OCI-LY7 (cell line): ENCODE measurements at regions of chr19 and their contacts with region 1.

Region 1: GRCh38 chr19:11535792-11536595 is 2.7 kb upstream of the CNN1 start:
- DNase-seq: peak; percentile 93
- H3K4me3 ChIP-seq: peak overlapping the region; percentile 44
- H3K27ac ChIP-seq: no peak overlapping the region
- H3K4me1 ChIP-seq: peaks cover 14% of the 10 kb centered on the region
- CTCF ChIP-seq: peak; percentile 91

Region 2: DNA sequence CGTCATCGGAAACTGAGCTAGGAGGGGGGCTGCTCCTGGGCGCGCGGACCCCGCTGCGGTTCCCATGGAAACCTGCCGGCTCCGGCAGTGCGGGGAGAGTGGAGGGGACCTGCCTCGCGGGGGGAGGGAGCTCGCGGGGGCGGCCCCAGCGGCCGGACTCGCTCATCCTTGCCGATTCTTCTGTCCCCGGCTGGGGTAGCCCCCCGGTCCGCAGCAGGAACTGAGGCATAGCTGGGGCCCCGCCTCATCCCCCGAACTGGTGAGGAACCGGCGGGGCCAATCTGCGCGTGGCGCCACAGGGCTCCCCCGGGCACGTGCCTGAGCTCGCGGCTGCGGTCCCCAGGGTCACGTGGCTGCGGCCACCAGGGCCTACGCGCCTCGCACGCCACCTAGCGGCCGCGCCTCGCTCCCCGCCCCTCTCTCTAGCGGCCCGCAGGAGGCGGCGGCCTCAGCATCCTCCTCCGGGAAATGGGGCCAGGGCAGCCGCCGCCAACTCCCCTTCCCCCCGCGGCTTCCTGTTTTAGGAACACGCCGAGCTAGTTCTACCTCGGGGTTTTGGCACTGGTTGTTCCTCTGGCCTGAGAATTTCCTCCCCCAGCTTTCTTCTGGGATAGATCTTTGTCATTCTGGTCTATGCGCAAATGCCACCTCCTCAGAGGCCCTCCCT is 53.5 kb before region 1 on chr19:
- CTCF ChIA-PET with region 1: no interaction called
- POLR2A ChIA-PET with region 1: no interaction called
- intact Hi-C with region 1: no loop called
- DNase-seq: peak; percentile 95
- H3K4me3 ChIP-seq: peak overlapping the region; percentile 65
- H3K27ac ChIP-seq: peak overlapping the region; percentile 65
- H3K4me1 ChIP-seq: peaks cover 23% of the 10 kb centered on the region
- CTCF ChIP-seq: peak; percentile 89

Region 3: DNA sequence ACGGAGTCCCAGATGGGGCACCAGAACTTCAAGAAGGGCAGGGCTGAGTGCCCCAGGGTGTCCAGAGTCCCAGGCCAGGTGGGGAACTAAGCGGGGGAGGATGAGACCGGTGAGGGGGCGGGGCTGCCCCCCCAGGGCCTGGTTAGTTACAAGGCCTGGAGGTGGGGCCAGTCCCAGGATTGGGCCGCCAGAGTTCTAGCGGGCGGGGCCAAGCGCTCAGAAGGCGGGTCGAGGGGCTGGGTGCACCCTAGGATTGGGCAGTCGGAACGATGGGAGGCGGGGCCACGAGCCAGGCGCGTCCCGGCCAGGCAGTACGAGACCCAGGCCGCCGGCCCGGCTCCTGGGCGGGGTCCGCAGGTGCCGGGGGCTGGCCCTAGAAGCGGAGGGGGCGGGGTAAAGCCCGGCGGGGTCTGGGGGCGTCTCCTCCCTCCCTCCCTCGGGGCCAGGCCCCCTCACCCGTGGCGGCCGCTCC is 30.9 kb before region 1 on chr19:
- CTCF ChIA-PET with region 1: no interaction called
- POLR2A ChIA-PET with region 1: interaction called, 11 read pairs
- intact Hi-C with region 1: no loop called
- DNase-seq: peak; percentile 97
- H3K4me3 ChIP-seq: peak overlapping the region; percentile 82
- H3K27ac ChIP-seq: peak overlapping the region; percentile 76
- H3K4me1 ChIP-seq: peaks cover 23% of the 10 kb centered on the region
- CTCF ChIP-seq: no peak